ENCODE measurements at regions of chr11 and their contacts with region 1.

Region 1: DNA sequence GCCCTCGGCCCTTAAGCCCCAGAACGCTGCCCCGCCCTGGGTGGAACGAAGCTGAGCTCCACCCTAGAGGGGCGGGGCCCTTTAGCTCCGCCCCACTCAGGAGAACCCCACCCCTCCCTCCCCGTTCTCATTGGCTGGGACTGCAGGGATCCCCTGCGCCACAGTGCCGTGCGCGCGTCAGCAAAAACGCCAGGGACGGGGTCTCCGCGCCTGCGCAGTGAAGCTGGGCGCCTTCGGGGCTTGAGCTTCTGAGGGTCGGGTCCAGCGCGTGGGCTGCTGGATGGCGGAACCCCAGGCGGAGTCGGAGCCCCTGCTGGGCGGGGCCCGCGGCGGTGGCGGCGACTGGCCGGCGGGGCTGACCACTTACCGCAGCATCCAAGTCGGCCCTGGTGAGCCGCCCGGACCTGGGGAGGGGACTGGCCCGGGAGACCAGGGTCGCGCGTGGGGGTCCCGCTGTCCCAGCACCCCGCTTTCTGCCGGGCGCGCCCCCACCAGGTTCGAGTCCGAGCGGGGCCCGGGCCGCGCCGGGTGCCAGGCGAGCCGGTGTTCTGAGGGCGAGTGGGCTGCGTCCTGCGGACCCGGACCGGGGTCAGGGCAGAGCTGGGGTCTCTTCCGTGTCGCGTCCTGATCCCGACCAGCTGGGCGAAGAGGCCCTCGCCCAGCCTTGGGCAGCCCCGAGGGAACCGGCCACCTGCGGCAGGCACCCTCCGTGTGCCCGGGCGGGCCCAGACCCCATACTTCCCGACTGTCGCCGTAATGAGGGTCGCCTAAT is at the start of gene TPCN2:
- DNase-seq: peak; percentile 96
- ATAC-seq: peak; percentile 91
- H3K4me3 Mint-ChIP-seq: peak within 1 kb of the TSS; percentile 77
- H3K27ac Mint-ChIP-seq: peak within 1 kb of the TSS; percentile 83
- H3K4me1 Mint-ChIP-seq: peaks cover 39% of the 10 kb centered on the region
- H3K27me3 Mint-ChIP-seq: no peaks in the 10 kb centered on the region
- CTCF ChIP-seq: no peak
- total RNA-seq, gene TPCN2: 20.2 to 24.6 TPM (median 22.0 TPM) in 3 replicates

Region 2: GRCh38 chr11:68878022-68878421 is 170.9 kb before region 1 on chr11:
- CTCF ChIA-PET with region 1: no interaction called
- POLR2A ChIA-PET with region 1: no interaction called
- DNase-seq: no peak
- ATAC-seq: no peak
- H3K4me3 Mint-ChIP-seq: no peak overlapping the region
- H3K27ac Mint-ChIP-seq: no peak overlapping the region
- H3K4me1 Mint-ChIP-seq: no peaks in the 10 kb centered on the region
- H3K27me3 Mint-ChIP-seq: no peaks in the 10 kb centered on the region
- CTCF ChIP-seq: no peak

Region 3: DNA sequence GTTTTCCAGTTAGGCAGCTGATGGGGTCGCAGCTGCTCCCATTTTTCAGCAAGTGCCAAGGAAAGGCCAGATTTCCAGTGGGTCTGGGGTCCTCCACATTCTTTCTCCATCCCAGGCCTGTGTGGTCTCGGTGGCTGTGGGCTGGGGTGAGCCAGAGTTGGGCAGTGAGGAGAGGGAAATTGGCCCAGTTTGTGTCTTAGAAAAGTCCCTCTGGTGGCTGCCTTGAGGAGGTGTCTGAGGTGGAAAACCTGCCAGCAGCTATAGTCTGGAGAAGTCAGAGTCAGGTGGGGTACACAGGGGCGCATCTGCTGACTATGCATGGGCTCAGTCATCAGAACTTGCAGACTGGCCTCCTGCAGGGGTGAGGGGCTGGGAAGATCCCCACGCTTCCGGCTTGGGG is 98.6 kb before region 1 on chr11:
- CTCF ChIA-PET with region 1: interaction called, 21 read pairs
- POLR2A ChIA-PET with region 1: no interaction called
- DNase-seq: peak; percentile 43
- ATAC-seq: peak; percentile 93
- H3K4me3 Mint-ChIP-seq: no peak overlapping the region
- H3K27ac Mint-ChIP-seq: peak overlapping the region; percentile 76; the same call in 1 of the 2 replicates
- H3K4me1 Mint-ChIP-seq: peaks cover 23% of the 10 kb centered on the region
- H3K27me3 Mint-ChIP-seq: no peaks in the 10 kb centered on the region
- CTCF ChIP-seq: no peak

Region 4: DNA sequence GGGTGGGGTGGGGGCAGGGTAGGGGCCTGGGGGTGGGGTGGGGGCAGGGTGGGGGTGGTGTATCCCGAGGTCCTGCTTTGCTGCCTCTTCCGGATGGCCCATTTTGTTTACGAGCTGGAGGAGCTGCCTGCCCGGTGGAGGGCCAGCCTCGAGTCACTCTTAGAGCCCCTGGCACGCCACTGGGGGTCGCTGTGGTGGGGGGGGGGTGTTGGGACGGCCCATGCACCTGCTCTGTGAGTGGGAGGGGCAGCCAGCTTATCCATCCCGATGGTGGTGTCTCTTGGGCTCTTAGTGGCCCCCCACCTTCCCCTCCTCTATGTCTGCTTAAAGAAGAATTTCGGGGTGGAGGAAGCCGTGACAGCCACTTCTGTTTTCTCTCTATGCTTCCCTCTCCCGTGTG is 92.8 kb before region 1 on chr11:
- CTCF ChIA-PET with region 1: interaction called, 21 read pairs
- POLR2A ChIA-PET with region 1: no interaction called
- DNase-seq: peak; percentile 49
- ATAC-seq: peak; percentile 72
- H3K4me3 Mint-ChIP-seq: no peak overlapping the region
- H3K27ac Mint-ChIP-seq: no peak overlapping the region
- H3K4me1 Mint-ChIP-seq: peaks cover 9% of the 10 kb centered on the region
- H3K27me3 Mint-ChIP-seq: no peaks in the 10 kb centered on the region
- CTCF ChIP-seq: no peak

Region 5: DNA sequence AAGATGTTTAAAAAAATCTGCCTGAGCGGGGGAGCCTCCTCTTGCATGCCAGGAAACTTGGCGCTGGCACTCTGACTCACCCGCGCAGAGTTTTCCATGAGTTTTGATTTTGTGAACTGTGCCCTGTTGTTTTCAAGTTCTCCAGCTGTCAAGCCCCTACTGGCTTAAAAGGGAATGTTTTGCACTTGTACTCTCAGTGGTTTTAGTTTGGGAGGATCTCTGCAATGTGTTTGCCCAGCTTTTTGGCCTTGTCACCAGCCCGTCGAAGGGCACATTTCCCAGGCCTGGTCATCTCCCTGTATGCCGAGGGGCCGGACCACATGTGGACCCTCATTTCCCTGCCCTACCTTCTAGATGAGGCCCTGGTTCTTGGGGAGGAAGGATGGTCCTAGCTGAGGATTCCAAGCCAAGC is 48.1 kb before region 1 on chr11:
- CTCF ChIA-PET with region 1: interaction called, 14 read pairs
- POLR2A ChIA-PET with region 1: no interaction called
- DNase-seq: peak; percentile 2
- ATAC-seq: peak; percentile 33
- H3K4me3 Mint-ChIP-seq: no peak overlapping the region
- H3K27ac Mint-ChIP-seq: peak overlapping the region; percentile 65; the same call in 1 of the 2 replicates
- H3K4me1 Mint-ChIP-seq: peaks cover 3% of the 10 kb centered on the region; the same call in 1 of the 2 replicates
- H3K27me3 Mint-ChIP-seq: no peaks in the 10 kb centered on the region
- CTCF ChIP-seq: no peak

Region 6: DNA sequence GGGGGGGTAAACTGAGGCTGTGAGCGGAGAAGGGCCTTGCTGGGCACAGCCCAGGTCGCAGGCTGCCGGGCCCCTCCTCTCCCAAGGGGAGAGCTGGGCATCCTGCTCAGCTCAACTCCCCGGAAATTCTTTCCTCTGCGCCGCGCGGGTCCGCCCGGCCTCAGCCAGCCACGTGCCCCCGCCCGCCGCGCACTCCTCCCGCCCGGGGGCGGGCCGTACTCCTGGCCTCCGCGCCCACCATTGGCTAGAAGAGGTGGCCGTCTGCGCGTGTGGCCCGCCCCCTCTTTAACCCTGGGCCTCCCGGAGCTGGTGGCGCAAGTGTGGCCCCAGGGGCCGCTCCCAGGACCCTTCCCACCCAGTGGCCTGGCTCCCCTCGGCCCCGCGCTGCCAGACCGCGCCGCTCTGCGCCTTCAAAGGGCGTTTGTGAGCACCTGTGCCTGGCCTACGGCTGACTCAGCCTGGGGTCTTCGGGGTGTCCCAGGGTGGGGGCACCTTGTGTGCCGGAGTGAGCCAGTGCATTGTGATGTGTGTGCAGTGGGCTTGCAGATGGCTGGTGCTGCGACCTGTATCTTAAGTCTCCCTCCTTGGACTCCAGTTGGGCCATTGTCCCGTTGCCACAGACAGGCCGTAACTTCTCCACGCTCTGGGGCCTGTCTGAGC is 37.8 kb before region 1 on chr11:
- CTCF ChIA-PET with region 1: interaction called, 50 read pairs
- POLR2A ChIA-PET with region 1: interaction called, 6 read pairs
- DNase-seq: peak; percentile 85
- ATAC-seq: peak; percentile 82
- H3K4me3 Mint-ChIP-seq: peak overlapping the region; percentile 39
- H3K27ac Mint-ChIP-seq: no peak overlapping the region
- H3K4me1 Mint-ChIP-seq: peaks cover 41% of the 10 kb centered on the region
- H3K27me3 Mint-ChIP-seq: peaks cover 5% of the 10 kb centered on the region
- CTCF ChIP-seq: no peak

Region 7: GRCh38 chr11:69035946-69036340 is 13.0 kb before region 1 on chr11:
- CTCF ChIA-PET with region 1: interaction called, 62 read pairs
- POLR2A ChIA-PET with region 1: no interaction called
- DNase-seq: no peak
- ATAC-seq: no peak
- H3K4me3 Mint-ChIP-seq: no peak overlapping the region
- H3K27ac Mint-ChIP-seq: no peak overlapping the region; the same call in 1 of the 2 replicates
- H3K4me1 Mint-ChIP-seq: peaks cover 12% of the 10 kb centered on the region
- H3K27me3 Mint-ChIP-seq: no peaks in the 10 kb centered on the region
- CTCF ChIP-seq: no peak